B cell (primary cell): ENCODE measurements at regions of chr5 and their contacts with region 1.

Region 1: GRCh38 chr5:112757468-112758208 is 20.0 kb downstream of the APC start:
- DNase-seq: peak; percentile 76
- ATAC-seq: peak; percentile 77
- H3K4me3 ChIP-seq: no peak overlapping the region
- H3K4me3 Mint-ChIP-seq: no peak overlapping the region
- H3K27ac ChIP-seq: peak overlapping the region in 1 of 2 donors; percentile 11
- H3K27ac Mint-ChIP-seq: peak overlapping the region; percentile 33
- H3K4me1 ChIP-seq: no peaks in the 10 kb centered on the region
- H3K4me1 Mint-ChIP-seq: peaks cover 8% of the 10 kb centered on the region
- H3K27me3 ChIP-seq: no peaks in the 10 kb centered on the region
- H3K27me3 Mint-ChIP-seq: no peaks in the 10 kb centered on the region
- CTCF ChIP-seq: peak; percentile 90

Region 2: DNA sequence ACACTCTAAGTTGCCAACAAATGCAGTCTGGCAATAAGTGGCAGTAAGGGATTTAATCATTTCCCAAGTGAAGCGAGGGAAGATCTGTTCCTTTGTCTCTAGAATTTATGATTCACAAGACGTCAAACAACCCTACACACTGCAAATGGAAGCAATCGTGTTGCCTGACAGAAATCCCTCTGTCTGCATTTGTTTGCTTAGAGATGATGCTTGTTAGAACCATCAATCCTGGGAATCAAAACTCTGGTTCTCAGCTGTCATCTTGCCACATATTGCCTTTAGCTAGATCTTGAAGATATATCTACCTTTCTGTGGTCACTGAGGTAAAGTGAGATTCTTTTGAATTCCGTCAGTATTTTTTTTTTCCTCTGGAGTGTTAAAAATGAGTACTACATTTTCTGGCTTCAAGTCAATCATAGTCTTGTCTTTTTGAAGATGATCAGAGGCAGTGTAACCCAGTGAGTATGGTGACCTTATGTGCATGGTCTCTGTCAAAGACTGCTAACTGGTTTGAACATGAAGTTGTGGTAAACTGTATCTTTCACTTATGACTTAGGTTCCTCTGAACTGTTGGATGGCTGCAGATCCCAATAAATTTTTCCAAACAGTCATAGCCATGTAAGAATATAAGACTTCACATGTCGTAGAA is 1138.9 kb before region 1 on chr5:
- CTCF ChIA-PET with region 1: no interaction called
- POLR2A ChIA-PET with region 1: no interaction called
- intact Hi-C with region 1: no loop called
- DNase-seq: no peak
- ATAC-seq: no peak
- H3K4me3 ChIP-seq: no peak overlapping the region
- H3K4me3 Mint-ChIP-seq: no peak overlapping the region
- H3K27ac ChIP-seq: no peak overlapping the region
- H3K27ac Mint-ChIP-seq: no peak overlapping the region
- H3K4me1 ChIP-seq: no peaks in the 10 kb centered on the region
- H3K4me1 Mint-ChIP-seq: no peaks in the 10 kb centered on the region
- H3K27me3 ChIP-seq: no peaks in the 10 kb centered on the region
- H3K27me3 Mint-ChIP-seq: no peaks in the 10 kb centered on the region
- CTCF ChIP-seq: no peak

Region 3: DNA sequence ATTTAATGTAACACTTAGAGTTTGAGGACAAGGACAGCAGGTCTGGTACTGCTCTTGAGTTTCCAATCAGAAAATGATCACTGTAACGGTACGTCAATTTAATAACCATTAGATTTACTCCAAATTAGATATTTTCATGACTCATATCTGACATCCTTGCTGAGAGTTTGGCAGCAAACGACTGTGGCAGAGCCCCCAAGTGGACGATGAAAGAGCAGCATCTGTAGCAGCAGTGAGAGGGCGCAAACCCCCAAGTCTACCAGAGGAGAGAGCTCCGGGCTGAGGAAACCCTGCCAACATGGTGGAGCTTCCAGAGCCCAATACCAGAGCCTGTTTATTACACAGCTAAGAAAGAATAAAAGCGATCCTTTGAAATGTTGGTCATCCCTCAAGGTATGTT is 265.3 kb before region 1 on chr5:
- CTCF ChIA-PET with region 1: interaction called, 6 read pairs
- POLR2A ChIA-PET with region 1: no interaction called
- intact Hi-C with region 1: loop called (anchors 1 kb)
- DNase-seq: peak; percentile 64
- ATAC-seq: peak; percentile 91
- H3K4me3 ChIP-seq: no peak overlapping the region
- H3K4me3 Mint-ChIP-seq: no peak overlapping the region
- H3K27ac ChIP-seq: no peak overlapping the region
- H3K27ac Mint-ChIP-seq: no peak overlapping the region
- H3K4me1 ChIP-seq: peaks cover 4% of the 10 kb centered on the region in 2 donors
- H3K4me1 Mint-ChIP-seq: peaks cover 7% of the 10 kb centered on the region
- H3K27me3 ChIP-seq: no peaks in the 10 kb centered on the region
- H3K27me3 Mint-ChIP-seq: peaks cover 10% of the 10 kb centered on the region
- CTCF ChIP-seq: peak; percentile 63

Region 4: GRCh38 chr5:112551419-112552032 is 206.1 kb before region 1 on chr5:
- CTCF ChIA-PET with region 1: interaction called, 190 read pairs
- POLR2A ChIA-PET with region 1: no interaction called
- intact Hi-C with region 1: loop called (anchors 1 kb)
- DNase-seq: peak; percentile 71
- ATAC-seq: peak; percentile 72
- H3K4me3 ChIP-seq: no peak overlapping the region
- H3K4me3 Mint-ChIP-seq: no peak overlapping the region
- H3K27ac ChIP-seq: no peak overlapping the region
- H3K27ac Mint-ChIP-seq: no peak overlapping the region
- H3K4me1 ChIP-seq: peaks cover 15 to 18% of the 10 kb centered on the region in 2 donors
- H3K4me1 Mint-ChIP-seq: peaks cover 26% of the 10 kb centered on the region
- H3K27me3 ChIP-seq: no peaks in the 10 kb centered on the region
- H3K27me3 Mint-ChIP-seq: no peaks in the 10 kb centered on the region
- CTCF ChIP-seq: peak; percentile 87

Region 5: GRCh38 chr5:112691758-112692157 is 65.9 kb before region 1 on chr5:
- CTCF ChIA-PET with region 1: interaction called, 18 read pairs
- POLR2A ChIA-PET with region 1: no interaction called
- intact Hi-C with region 1: no loop called
- DNase-seq: peak; percentile 67
- ATAC-seq: no peak
- H3K4me3 ChIP-seq: no peak overlapping the region
- H3K4me3 Mint-ChIP-seq: no peak overlapping the region
- H3K27ac ChIP-seq: no peak overlapping the region
- H3K27ac Mint-ChIP-seq: no peak overlapping the region
- H3K4me1 ChIP-seq: peaks cover 0 to 2% of the 10 kb centered on the region in 2 donors
- H3K4me1 Mint-ChIP-seq: peaks cover 5% of the 10 kb centered on the region
- H3K27me3 ChIP-seq: peaks cover 0 to 6% (median 0%) of the 10 kb centered on the region in 4 experiments
- H3K27me3 Mint-ChIP-seq: peaks cover 18% of the 10 kb centered on the region
- CTCF ChIP-seq: no peak

Region 6: DNA sequence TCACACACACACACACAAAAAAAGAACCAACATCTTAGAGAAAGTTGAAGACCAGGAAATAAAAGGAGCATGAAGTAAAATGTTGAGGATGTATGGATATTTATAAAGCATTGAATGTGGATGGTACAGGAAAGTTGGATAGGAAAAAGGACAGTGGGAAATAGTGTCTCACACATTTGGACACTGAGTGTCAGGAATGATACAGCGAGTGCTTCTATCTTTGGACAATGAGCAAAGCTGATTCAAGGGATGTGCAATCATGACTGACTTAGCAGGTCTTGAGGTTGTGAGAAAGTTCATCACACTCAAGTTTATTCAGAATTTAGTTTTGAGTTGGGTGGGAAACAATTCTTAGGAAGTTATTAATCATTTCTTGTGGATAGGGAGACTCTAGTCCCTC is 53.4 kb after region 1 on chr5:
- CTCF ChIA-PET with region 1: no interaction called
- POLR2A ChIA-PET with region 1: no interaction called
- intact Hi-C with region 1: no loop called
- DNase-seq: no peak
- ATAC-seq: no peak
- H3K4me3 ChIP-seq: no peak overlapping the region
- H3K4me3 Mint-ChIP-seq: no peak overlapping the region
- H3K27ac ChIP-seq: no peak overlapping the region
- H3K27ac Mint-ChIP-seq: no peak overlapping the region
- H3K4me1 ChIP-seq: no peaks in the 10 kb centered on the region
- H3K4me1 Mint-ChIP-seq: peaks cover 7% of the 10 kb centered on the region
- H3K27me3 ChIP-seq: no peaks in the 10 kb centered on the region
- H3K27me3 Mint-ChIP-seq: no peaks in the 10 kb centered on the region
- CTCF ChIP-seq: no peak

Region 7: GRCh38 chr5:112848116-112848811 is 90.6 kb after region 1 on chr5:
- CTCF ChIA-PET with region 1: interaction called, 14 read pairs
- POLR2A ChIA-PET with region 1: no interaction called
- intact Hi-C with region 1: loop called (anchors 5 kb)
- DNase-seq: peak; percentile 77
- ATAC-seq: peak; percentile 100
- H3K4me3 ChIP-seq: no peak overlapping the region
- H3K4me3 Mint-ChIP-seq: peak overlapping the region; percentile 0
- H3K27ac ChIP-seq: no peak overlapping the region
- H3K27ac Mint-ChIP-seq: peak overlapping the region; percentile 39
- H3K4me1 ChIP-seq: peaks cover 0 to 9% of the 10 kb centered on the region in 2 donors
- H3K4me1 Mint-ChIP-seq: peaks cover 5% of the 10 kb centered on the region
- H3K27me3 ChIP-seq: no peaks in the 10 kb centered on the region
- H3K27me3 Mint-ChIP-seq: peaks cover 6% of the 10 kb centered on the region
- CTCF ChIP-seq: peak; percentile 83